Activated CD4-positive, alpha-beta T cell treated with anti-CD3 and anti-CD28 coated beads for 36 hours (primary cell): ENCODE measurements at regions of chr3 and their contacts with region 1.

Region 1: GRCh38 chr3:183142199-183142598 is 20.3 kb downstream of the LAMP3 start:
- DNase-seq: no peak
- ATAC-seq: no peak
- H3K4me3 Mint-ChIP-seq: no peak overlapping the region
- H3K27ac Mint-ChIP-seq: no peak overlapping the region
- H3K4me1 Mint-ChIP-seq: no peaks in the 10 kb centered on the region
- H3K27me3 Mint-ChIP-seq: no peaks in the 10 kb centered on the region

Region 2: GRCh38 chr3:183178629-183179549 is 36.7 kb after region 1 on chr3:
- CTCF ChIA-PET with region 1: interaction called, 3 read pairs
- POLR2A ChIA-PET with region 1: no interaction called
- intact Hi-C with region 1: loop called in 1 of 2 experiments (anchors 5 kb)
- DNase-seq: peak; percentile 82
- ATAC-seq: peak; percentile 82
- H3K4me3 Mint-ChIP-seq: peak overlapping the region; percentile 70
- H3K27ac Mint-ChIP-seq: no peak overlapping the region
- H3K4me1 Mint-ChIP-seq: peaks cover 7% of the 10 kb centered on the region
- H3K27me3 Mint-ChIP-seq: peaks cover 25% of the 10 kb centered on the region